Left ventricle myocardium superior (tissue), 1 donor: ENCODE measurements at regions of chr6 and their contacts with region 1.

Region 1: DNA sequence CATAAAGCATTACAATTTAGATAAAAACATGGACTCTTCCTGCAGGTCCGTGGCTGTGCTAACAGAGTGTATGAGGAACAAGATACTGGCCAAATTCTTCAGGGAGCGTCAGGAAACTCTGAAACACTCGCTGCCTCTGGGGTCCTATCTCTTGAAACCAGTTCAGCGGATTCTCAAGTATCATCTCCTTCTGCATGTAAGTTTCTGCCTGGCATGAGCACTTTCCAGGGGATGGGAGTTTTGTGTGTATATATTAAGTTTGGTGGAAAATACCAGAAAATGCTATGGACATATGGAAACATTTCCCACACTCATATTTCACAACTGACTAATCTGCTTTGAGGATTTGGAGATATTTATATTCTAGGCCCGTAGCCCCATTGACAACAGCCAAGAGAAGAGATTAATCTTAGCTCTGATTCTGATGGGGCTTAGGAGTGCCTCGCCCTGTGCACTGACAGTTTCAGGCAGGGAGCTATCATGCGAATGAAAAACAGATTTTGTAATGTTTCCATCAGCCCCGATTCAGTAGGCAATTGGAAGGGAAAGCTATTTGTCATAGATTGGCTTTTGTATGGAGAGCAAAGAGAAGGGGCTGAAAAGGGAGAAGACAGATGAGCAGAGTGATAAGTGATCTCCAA is 64.7 kb upstream of the MTHFD1L start:
- DNase-seq: no peak
- ATAC-seq: peak; percentile 77

Region 2: GRCh38 chr6:150599199-150600009 is 201.4 kb before region 1 on chr6 and contains the start of gene PLEKHG1:
- intact Hi-C with region 1: loop called (anchors 10 kb)
- DNase-seq: peak; percentile 89
- ATAC-seq: peak; percentile 96
- total RNA-seq, gene PLEKHG1: 7.6 TPM